Psoas muscle (tissue), 8 donors: ENCODE measurements at regions of chr11 and their contacts with region 1.

Region 1: GRCh38 chr11:100575870-100576705 is 111.0 kb upstream of the ARHGAP42 start:
- DNase-seq: no peak
- ATAC-seq: peak; percentile 52 to 86 (median 72)
- H3K4me3 ChIP-seq: no peak overlapping the region
- H3K27ac ChIP-seq: no peak overlapping the region
- H3K4me1 ChIP-seq: peaks cover 3% of the 10 kb centered on the region
- H3K27me3 ChIP-seq: no peaks in the 10 kb centered on the region
- CTCF ChIP-seq: peak; percentile 79

Region 2: GRCh38 chr11:100434814-100435641 is 141.1 kb before region 1 on chr11:
- intact Hi-C with region 1: no loop called
- DNase-seq: no peak
- ATAC-seq: no peak
- H3K4me3 ChIP-seq: no peak overlapping the region
- H3K27ac ChIP-seq: no peak overlapping the region
- H3K4me1 ChIP-seq: no peaks in the 10 kb centered on the region
- H3K27me3 ChIP-seq: no peaks in the 10 kb centered on the region
- CTCF ChIP-seq: no peak

Region 3: GRCh38 chr11:100515087-100515486 is 61.0 kb before region 1 on chr11:
- intact Hi-C with region 1: no loop called
- DNase-seq: no peak
- ATAC-seq: no peak
- H3K4me3 ChIP-seq: no peak overlapping the region
- H3K27ac ChIP-seq: no peak overlapping the region
- H3K4me1 ChIP-seq: no peaks in the 10 kb centered on the region
- H3K27me3 ChIP-seq: no peaks in the 10 kb centered on the region
- CTCF ChIP-seq: no peak

Region 4: GRCh38 chr11:100687630-100688395 is 111.7 kb after region 1 on chr11:
- intact Hi-C with region 1: loop called in 1 of 2 experiments (anchors 10 kb)
- DNase-seq: peak; percentile 56 to 57
- ATAC-seq: peak; percentile 72 to 85 (median 82)
- H3K4me3 ChIP-seq: peak overlapping the region; percentile 74
- H3K27ac ChIP-seq: peak overlapping the region; percentile 86
- H3K4me1 ChIP-seq: no peaks in the 10 kb centered on the region
- H3K27me3 ChIP-seq: no peaks in the 10 kb centered on the region
- CTCF ChIP-seq: peak; percentile 56

Region 5: GRCh38 chr11:100855466-100856067 is 279.5 kb after region 1 on chr11:
- intact Hi-C with region 1: loop called (anchors 2 to 5 kb)
- DNase-seq: no peak
- ATAC-seq: peak in 1 of 4 donors; percentile 57
- H3K4me3 ChIP-seq: no peak overlapping the region
- H3K27ac ChIP-seq: no peak overlapping the region
- H3K4me1 ChIP-seq: no peaks in the 10 kb centered on the region
- H3K27me3 ChIP-seq: no peaks in the 10 kb centered on the region
- CTCF ChIP-seq: peak; percentile 64

Region 6: GRCh38 chr11:100930185-100930778 is 354.2 kb after region 1 on chr11:
- intact Hi-C with region 1: loop called (anchors 5 kb)
- DNase-seq: no peak
- ATAC-seq: peak in 1 of 4 donors; percentile 69
- H3K4me3 ChIP-seq: no peak overlapping the region
- H3K27ac ChIP-seq: no peak overlapping the region
- H3K4me1 ChIP-seq: no peaks in the 10 kb centered on the region
- H3K27me3 ChIP-seq: no peaks in the 10 kb centered on the region
- CTCF ChIP-seq: peak; percentile 71

Region 7: GRCh38 chr11:100939571-100939970 is 363.5 kb after region 1 on chr11:
- intact Hi-C with region 1: loop called (anchors 5 kb)
- DNase-seq: no peak
- ATAC-seq: no peak
- H3K4me3 ChIP-seq: no peak overlapping the region
- H3K27ac ChIP-seq: no peak overlapping the region
- H3K4me1 ChIP-seq: peaks cover 3% of the 10 kb centered on the region
- H3K27me3 ChIP-seq: no peaks in the 10 kb centered on the region
- CTCF ChIP-seq: no peak